ENCODE measurements at regions of chr1 and their contacts with region 1.

Region 1: GRCh38 chr1:89719502-89720306 is 86.8 kb downstream of the LRRC8C start:
- DNase-seq: no peak
- H3K4me3 ChIP-seq: no peak overlapping the region
- CTCF ChIP-seq: no peak

Region 2: DNA sequence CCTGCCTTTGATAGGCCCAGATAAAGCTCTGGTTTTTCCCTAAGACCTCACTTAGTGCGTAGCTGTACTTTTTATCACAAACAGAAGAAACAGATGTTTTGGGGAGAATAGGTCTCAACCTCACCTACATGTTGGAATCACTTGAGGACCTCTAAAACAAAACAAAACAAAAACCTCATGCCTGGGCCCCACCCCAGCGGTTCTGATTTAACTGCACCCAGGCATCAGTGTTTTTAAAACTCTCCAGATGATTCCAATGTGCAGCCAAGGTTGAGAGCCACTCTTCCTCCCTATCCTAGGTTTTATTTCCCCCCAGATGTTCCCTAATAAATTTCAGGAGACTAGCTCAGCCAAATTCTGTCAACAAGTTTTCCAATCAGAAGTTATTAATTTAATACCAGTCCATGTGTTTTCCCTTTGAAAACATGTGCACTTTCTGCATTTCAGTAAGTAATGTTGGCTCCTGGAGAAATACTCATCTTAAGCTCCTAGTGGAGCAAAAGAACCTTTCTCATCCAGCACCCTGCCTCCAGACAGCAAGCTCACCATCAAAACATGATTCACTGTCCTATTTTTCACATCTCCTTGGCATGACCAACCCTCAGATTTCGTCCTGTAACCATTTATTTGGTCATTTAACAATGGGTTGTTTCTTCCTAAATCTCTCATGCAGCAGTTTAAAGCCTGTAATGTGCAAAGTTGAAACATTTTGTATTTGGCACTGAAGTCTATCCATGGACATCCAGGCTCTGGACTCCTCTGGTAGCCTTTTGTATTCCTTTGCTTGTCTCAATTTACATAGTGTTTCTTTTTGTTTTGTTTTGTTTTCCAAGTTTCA is 59.3 kb before region 1 on chr1:
- in situ Hi-C with region 1: loop called (anchors 5 kb)
- DNase-seq: no peak
- H3K4me3 ChIP-seq: no peak overlapping the region
- CTCF ChIP-seq: no peak